A673 (cell line): ENCODE measurements at regions of chr11 and their contacts with region 1.

Region 1: DNA sequence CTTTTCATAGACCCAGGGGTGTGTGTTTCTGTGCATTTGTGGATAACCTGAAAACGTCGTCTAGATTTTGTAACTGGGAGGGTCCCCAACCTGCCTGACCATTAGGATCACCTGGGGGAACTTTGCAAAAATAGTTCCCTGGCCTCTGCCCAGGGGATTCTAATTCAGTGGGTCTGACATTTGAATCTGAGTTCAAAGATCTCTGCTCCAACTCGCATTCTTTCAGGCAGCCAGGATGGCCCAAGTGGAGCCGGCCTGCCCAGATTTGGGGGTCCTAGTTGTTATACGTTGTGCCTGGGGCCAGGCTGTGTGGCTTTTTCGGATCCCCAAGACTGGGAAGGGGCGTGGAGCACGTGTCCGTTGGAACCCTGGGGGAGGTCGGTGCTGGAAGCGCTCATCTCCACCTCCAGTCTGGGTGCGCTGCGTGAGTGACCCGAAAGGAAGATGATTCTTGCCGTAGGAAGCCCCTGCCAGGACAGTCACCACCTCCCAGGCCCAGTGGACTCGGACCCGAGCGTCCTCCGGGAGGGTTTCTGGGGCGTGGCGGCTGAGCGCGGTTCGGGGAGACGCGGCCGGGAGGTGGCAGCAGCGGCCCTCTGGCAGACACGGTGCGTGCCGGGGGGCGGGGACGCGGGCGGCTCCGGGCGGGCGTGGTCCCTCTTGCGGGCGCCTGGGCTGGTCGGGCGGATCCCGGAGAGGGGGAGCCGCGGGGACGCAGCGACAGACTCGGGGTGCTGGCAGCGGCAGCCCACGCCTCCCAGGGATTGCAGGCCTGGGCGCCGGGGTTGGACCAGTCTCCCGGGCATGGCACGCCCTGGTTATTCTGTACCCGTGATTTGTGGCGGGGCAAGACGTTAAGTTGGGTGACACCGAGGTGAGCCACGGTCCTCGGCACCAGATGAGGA is 29.2 kb upstream of the PLET1 start:
- DNase-seq: peak; percentile 93
- H3K4me3 ChIP-seq: peak overlapping the region; percentile 64
- H3K27ac ChIP-seq: peak overlapping the region; percentile 92
- H3K4me1 ChIP-seq: peaks cover 44% of the 10 kb centered on the region
- H3K27me3 ChIP-seq: no peaks in the 10 kb centered on the region
- CTCF ChIP-seq: peak; percentile 85

Region 2: DNA sequence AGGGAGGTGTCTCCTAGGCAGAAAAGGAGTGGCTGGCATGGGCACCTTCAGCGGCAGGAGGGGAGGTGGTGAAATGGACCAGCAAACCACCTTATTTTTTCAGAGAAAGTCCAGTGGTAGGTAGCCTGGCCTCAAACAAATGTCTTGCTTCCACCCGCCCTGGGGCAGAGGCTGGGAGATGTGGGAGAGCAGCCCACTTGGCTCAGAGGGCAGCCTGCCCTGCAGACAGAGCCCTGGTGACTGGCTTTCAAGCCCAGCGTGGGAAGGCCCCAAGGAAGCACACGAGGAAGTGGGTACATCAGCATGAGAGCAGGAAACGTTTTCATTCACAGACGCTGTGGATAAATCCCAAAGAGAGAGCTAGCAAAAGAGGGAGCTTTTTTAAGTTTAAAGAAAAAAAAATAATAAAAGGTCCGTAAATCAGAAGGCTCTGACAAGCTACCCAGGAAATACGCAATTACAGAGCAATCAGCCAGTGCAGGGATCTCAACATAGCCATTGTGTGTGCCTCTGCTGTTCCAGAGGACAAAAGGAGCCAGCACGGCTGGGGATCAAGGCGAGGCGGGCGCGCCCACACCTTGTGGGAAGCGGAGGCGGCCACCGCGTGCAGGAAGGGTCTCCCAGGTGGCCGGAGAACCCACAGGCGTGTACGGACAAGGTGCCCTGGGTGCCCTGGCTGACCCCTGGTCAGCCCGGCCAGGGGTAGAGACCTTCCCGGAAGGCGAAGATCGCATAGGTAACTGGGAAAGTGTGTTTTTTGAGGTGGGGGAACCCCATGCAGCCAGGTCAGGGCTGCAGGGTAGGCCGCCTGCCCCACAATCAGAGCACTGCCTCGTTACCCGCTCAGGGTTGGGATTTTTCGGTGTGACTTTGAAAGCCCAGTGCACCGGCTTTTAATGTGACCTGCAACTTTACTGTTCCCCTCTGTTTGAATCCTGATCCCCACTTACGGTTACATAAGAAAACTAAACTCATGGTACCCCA is 209.7 kb after region 1 on chr11:
- CTCF ChIA-PET with region 1: no interaction called
- POLR2A ChIA-PET with region 1: interaction called, 5 read pairs
- intact Hi-C with region 1: loop called (anchors 5 kb)
- DNase-seq: peak; percentile 94
- H3K4me3 ChIP-seq: no peak overlapping the region
- H3K27ac ChIP-seq: peak overlapping the region; percentile 79
- H3K4me1 ChIP-seq: peaks cover 32% of the 10 kb centered on the region
- H3K27me3 ChIP-seq: no peaks in the 10 kb centered on the region
- CTCF ChIP-seq: no peak

Region 3: DNA sequence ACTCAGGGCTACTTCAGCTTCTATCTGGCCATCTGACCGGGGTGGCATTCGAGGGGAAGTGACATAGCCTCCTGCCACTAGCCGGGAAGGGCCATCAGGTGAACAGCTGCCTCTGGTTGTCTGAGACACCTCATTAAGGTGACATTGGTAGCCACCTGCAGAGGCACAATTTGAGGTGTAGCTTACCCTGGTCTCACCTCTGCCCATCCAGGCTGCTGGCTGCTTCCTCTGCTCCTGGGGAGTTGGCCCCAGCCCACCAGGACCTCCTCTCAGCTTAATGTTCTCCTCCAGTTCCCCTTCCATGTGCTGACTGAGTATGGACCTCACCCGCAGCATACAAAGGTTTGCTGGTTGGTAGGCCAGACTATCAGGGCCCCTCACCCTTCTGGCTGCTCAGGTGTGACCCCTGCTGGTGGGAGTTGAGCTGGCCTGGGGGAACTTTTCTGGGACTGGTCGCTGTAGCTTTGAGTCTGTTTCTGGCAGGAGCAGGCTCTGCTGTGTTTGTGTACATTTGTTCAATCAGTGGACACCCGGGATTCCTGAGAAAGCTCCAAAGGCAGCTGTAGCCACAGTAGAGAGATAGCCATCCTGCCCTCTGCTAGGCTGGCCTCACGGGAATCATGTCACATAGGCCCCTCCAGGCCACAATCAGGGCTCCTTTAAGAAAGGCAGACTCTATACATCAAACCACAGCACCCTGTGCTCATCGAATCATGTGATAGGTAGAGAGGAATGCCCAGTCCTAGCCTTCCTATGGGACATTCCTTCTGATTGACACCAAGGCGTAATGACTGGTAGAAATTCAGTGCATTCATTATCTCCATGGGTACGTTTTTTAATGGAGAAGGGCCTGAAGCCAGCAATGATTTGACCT is 265.9 kb after region 1 on chr11:
- CTCF ChIA-PET with region 1: interaction called, 9 read pairs
- POLR2A ChIA-PET with region 1: no interaction called
- intact Hi-C with region 1: loop called (anchors 1 kb)
- DNase-seq: peak; percentile 89
- H3K4me3 ChIP-seq: no peak overlapping the region
- H3K27ac ChIP-seq: no peak overlapping the region
- H3K4me1 ChIP-seq: peaks cover 22% of the 10 kb centered on the region
- H3K27me3 ChIP-seq: no peaks in the 10 kb centered on the region
- CTCF ChIP-seq: peak; percentile 97

Region 4: GRCh38 chr11:112795142-112795815 is 505.4 kb after region 1 on chr11:
- CTCF ChIA-PET with region 1: no interaction called
- POLR2A ChIA-PET with region 1: no interaction called
- intact Hi-C with region 1: loop called (anchors 5 kb)
- DNase-seq: peak; percentile 81
- H3K4me3 ChIP-seq: no peak overlapping the region
- H3K27ac ChIP-seq: no peak overlapping the region
- H3K4me1 ChIP-seq: no peaks in the 10 kb centered on the region
- H3K27me3 ChIP-seq: no peaks in the 10 kb centered on the region
- CTCF ChIP-seq: peak; percentile 81

Region 5: GRCh38 chr11:112961146-112961668 is 671.4 kb after region 1 on chr11 and contains the start of gene NCAM1:
- CTCF ChIA-PET with region 1: no interaction called
- POLR2A ChIA-PET with region 1: interaction called, 3 read pairs
- intact Hi-C with region 1: loop called (anchors 5 kb)
- DNase-seq: peak; percentile 96
- H3K4me3 ChIP-seq: peak within 1 kb of the TSS; percentile 61
- H3K27ac ChIP-seq: no peak within 1 kb of the TSS
- H3K4me1 ChIP-seq: peaks cover 3% of the 10 kb centered on the region
- H3K27me3 ChIP-seq: peaks cover 35% of the 10 kb centered on the region
- CTCF ChIP-seq: no peak
- total RNA-seq, gene NCAM1: 12.0 and 14.3 TPM in 2 replicates

Region 6: GRCh38 chr11:113119074-113119473 is 829.2 kb after region 1 on chr11:
- CTCF ChIA-PET with region 1: no interaction called
- POLR2A ChIA-PET with region 1: no interaction called
- intact Hi-C with region 1: loop called (anchors 5 kb)
- DNase-seq: peak; percentile 36
- H3K4me3 ChIP-seq: no peak overlapping the region
- H3K27ac ChIP-seq: no peak overlapping the region
- H3K4me1 ChIP-seq: no peaks in the 10 kb centered on the region
- H3K27me3 ChIP-seq: no peaks in the 10 kb centered on the region
- CTCF ChIP-seq: no peak

Region 7: GRCh38 chr11:113289431-113290187 is 999.8 kb after region 1 on chr11:
- CTCF ChIA-PET with region 1: interaction called, 8 read pairs
- POLR2A ChIA-PET with region 1: no interaction called
- intact Hi-C with region 1: loop called (anchors 2 kb)
- DNase-seq: peak; percentile 83
- H3K4me3 ChIP-seq: no peak overlapping the region
- H3K27ac ChIP-seq: no peak overlapping the region
- H3K4me1 ChIP-seq: no peaks in the 10 kb centered on the region
- H3K27me3 ChIP-seq: no peaks in the 10 kb centered on the region
- CTCF ChIP-seq: peak; percentile 95